ENCODE measurements at regions of chr14 and their contacts with region 1.

Region 1: GRCh38 chr14:93115069-93115820 is 480 bp downstream of the ITPK1 start:
- DNase-seq: peak; percentile 65 to 93 (median 81)
- ATAC-seq: peak; percentile 81
- H3K4me3 ChIP-seq: peak overlapping the region; percentile 58 to 76
- H3K4me3 Mint-ChIP-seq: peak overlapping the region; percentile 88
- H3K27ac ChIP-seq: peak overlapping the region; percentile 43 to 53
- H3K27ac Mint-ChIP-seq: peak overlapping the region; percentile 89
- H3K4me1 ChIP-seq: peaks cover 34% of the 10 kb centered on the region
- H3K4me1 Mint-ChIP-seq: peaks cover 34% of the 10 kb centered on the region
- H3K27me3 ChIP-seq: no peaks in the 10 kb centered on the region
- H3K27me3 Mint-ChIP-seq: no peaks in the 10 kb centered on the region
- CTCF ChIP-seq: no peak

Region 2: DNA sequence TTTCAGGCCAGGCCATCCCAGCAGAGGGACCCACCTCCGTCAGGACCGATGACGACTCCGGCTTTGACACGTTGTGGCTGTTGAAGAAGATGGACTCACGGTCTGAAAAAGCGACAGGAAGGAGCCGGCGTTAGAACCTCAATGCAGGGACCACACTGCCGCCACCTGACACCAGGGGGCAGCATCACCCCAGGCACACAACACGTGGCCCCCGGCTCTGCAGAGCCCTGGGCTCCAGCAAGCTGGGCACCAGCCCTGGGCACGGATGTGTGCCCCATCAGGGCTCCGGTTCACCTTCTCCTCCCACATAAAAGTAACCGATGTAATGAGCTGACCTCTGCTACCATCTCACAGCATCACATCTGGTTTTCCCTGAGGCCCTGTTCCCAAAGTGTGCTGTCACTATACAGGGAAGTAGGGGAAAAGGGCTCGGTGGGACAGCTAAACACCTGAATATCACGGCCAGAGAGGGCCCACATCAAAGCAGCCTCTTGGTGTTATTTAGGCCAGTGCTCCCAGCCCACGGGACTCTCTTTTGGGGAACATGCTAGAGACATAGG is 163.3 kb before region 1 on chr14:
- CTCF ChIA-PET with region 1: interaction called, 40 read pairs
- POLR2A ChIA-PET with region 1: no interaction called
- intact Hi-C with region 1: loop called in 1 of 2 experiments (anchors 1 kb)
- DNase-seq: peak; percentile 69 to 92 (median 82)
- ATAC-seq: peak; percentile 98
- H3K4me3 ChIP-seq: no peak overlapping the region
- H3K4me3 Mint-ChIP-seq: no peak overlapping the region
- H3K27ac ChIP-seq: no peak overlapping the region
- H3K27ac Mint-ChIP-seq: no peak overlapping the region
- H3K4me1 ChIP-seq: no peaks in the 10 kb centered on the region
- H3K4me1 Mint-ChIP-seq: peaks cover 4% of the 10 kb centered on the region
- H3K27me3 ChIP-seq: no peaks in the 10 kb centered on the region
- H3K27me3 Mint-ChIP-seq: no peaks in the 10 kb centered on the region
- CTCF ChIP-seq: peak; percentile 93

Region 3: DNA sequence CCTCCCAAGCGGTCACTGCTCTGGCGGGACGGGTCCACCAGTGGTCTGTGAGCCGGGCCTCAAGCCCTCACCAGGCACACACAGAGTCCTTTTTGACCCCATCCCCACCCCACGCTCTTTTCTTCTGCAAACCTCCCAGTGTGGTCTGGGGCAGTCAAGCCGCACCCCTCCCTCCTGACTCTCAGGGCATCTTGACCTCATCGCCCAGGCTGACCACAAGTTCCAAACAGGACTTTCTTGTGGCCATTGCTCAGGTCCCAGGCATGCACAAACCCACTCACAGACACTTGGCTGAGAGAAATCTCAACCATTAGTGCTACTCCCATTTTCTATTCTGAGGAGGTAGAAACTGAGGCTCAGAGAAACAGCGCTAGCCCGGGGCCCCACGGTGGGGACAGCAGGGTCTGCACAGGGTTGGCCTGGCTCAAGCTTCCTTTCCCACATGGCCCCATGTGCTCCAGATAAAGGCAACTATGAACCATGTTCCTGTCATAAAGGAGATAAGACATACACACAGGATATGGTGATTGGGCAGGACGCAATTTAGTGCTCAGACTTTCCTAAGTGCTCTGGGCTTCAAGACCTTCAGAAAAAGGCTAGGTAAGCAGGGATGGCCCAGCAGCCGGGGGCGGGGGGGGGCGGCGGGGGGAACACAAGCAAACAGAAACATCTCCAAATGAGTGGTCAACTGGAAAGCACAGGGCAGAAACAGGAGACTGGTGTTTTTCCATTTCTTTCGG is 69.1 kb before region 1 on chr14:
- CTCF ChIA-PET with region 1: interaction called, 11 read pairs
- POLR2A ChIA-PET with region 1: no interaction called
- intact Hi-C with region 1: no loop called
- DNase-seq: no peak
- ATAC-seq: no peak
- H3K4me3 ChIP-seq: no peak overlapping the region
- H3K4me3 Mint-ChIP-seq: no peak overlapping the region
- H3K27ac ChIP-seq: no peak overlapping the region
- H3K27ac Mint-ChIP-seq: no peak overlapping the region
- H3K4me1 ChIP-seq: peaks cover 42% of the 10 kb centered on the region
- H3K4me1 Mint-ChIP-seq: peaks cover 41% of the 10 kb centered on the region
- H3K27me3 ChIP-seq: no peaks in the 10 kb centered on the region
- H3K27me3 Mint-ChIP-seq: no peaks in the 10 kb centered on the region
- CTCF ChIP-seq: no peak

Region 4: DNA sequence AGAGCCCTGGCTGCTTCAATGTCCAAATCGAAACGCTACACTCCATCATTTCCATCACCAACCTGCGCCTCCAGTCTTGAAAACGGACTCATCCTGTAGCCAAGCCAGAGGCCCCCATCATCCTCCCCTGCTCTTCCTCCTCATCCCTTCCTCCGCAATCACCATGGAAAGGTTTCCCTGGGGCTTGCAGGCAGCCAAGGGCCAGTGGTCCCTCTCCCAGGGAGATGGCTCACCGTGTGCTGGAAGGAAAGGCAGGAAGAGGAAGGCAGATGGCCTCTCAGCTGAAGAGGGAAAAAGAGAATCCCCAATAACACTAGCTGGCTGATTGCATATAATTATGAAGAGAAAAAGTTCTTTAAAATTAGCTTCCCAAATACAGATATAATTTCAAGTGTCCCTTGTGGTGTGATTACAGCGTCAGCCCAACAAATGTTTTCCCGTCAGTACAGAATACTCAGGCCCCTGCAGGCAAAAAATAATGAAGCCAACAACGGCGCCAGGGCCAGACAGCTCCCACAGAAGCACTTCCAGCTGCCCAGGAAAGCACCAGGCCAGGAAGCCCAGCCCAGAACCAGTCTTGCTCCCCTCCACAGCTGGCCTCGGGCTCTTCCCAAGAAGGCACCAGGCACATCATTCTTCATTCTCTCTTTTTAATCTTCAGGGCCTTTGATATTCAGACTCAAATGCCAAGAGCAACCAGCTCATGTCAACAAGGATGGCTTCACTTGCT is 24.3 kb before region 1 on chr14:
- CTCF ChIA-PET with region 1: interaction called, 84 read pairs
- POLR2A ChIA-PET with region 1: interaction called, 5 read pairs
- intact Hi-C with region 1: no loop called
- DNase-seq: no peak
- ATAC-seq: no peak
- H3K4me3 ChIP-seq: no peak overlapping the region
- H3K4me3 Mint-ChIP-seq: no peak overlapping the region
- H3K27ac ChIP-seq: no peak overlapping the region
- H3K27ac Mint-ChIP-seq: peak overlapping the region; percentile 60
- H3K4me1 ChIP-seq: peaks cover 16% of the 10 kb centered on the region
- H3K4me1 Mint-ChIP-seq: peaks cover 59% of the 10 kb centered on the region
- H3K27me3 ChIP-seq: no peaks in the 10 kb centered on the region
- H3K27me3 Mint-ChIP-seq: no peaks in the 10 kb centered on the region
- CTCF ChIP-seq: no peak

Region 5: GRCh38 chr14:93137864-93138263 is 22.6 kb after region 1 on chr14:
- CTCF ChIA-PET with region 1: interaction called, 249 read pairs
- POLR2A ChIA-PET with region 1: interaction called, 4 read pairs
- intact Hi-C with region 1: loop called (anchors 1 kb)
- DNase-seq: no peak
- ATAC-seq: no peak
- H3K4me3 ChIP-seq: no peak overlapping the region
- H3K4me3 Mint-ChIP-seq: no peak overlapping the region
- H3K27ac ChIP-seq: no peak overlapping the region
- H3K27ac Mint-ChIP-seq: no peak overlapping the region
- H3K4me1 ChIP-seq: no peaks in the 10 kb centered on the region
- H3K4me1 Mint-ChIP-seq: peaks cover 2% of the 10 kb centered on the region
- H3K27me3 ChIP-seq: no peaks in the 10 kb centered on the region
- H3K27me3 Mint-ChIP-seq: no peaks in the 10 kb centered on the region
- CTCF ChIP-seq: no peak

Region 6: DNA sequence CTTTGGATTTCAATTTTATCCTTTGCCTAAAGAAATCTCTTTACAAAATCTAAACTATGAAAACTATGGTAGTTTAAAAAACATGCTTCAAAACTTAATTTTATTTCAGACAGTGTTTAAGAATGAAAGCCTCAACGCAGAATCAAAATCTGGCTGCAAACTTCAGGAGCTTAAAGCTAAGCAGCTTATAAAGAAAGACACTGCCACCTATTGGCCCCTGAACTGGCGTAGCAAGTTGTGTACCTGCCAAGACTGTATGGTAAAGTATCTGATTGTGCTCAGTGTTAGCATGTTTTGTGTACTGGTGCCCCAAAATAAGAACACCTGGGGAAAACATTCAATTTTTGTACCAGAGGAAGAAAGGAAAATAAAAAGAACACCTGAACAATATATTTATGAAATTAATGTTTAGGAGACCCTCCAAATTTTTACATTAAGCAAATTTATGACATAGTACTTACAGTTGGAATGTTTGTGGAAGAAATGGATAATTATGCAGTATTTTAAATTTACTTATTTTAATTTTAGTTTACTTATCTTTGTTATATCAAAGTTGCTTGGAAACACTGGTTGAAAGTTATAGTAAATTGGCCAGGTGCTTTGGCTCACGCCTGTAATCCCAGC is 104.0 kb after region 1 on chr14:
- CTCF ChIA-PET with region 1: interaction called, 47 read pairs
- POLR2A ChIA-PET with region 1: no interaction called
- intact Hi-C with region 1: loop called (anchors 1 kb)
- DNase-seq: peak in 5 of 9 experiments; percentile 47 to 77 (median 65)
- ATAC-seq: peak; percentile 84
- H3K4me3 ChIP-seq: no peak overlapping the region
- H3K4me3 Mint-ChIP-seq: no peak overlapping the region
- H3K27ac ChIP-seq: no peak overlapping the region
- H3K27ac Mint-ChIP-seq: no peak overlapping the region
- H3K4me1 ChIP-seq: no peaks in the 10 kb centered on the region
- H3K4me1 Mint-ChIP-seq: no peaks in the 10 kb centered on the region
- H3K27me3 ChIP-seq: no peaks in the 10 kb centered on the region
- H3K27me3 Mint-ChIP-seq: no peaks in the 10 kb centered on the region
- CTCF ChIP-seq: peak; percentile 76